Sigmoid colon (tissue), 7 donors: ENCODE measurements at regions of chr18 and their contacts with region 1.

Region 1: GRCh38 chr18:22933206-22933957 is at the start of gene RBBP8:
- DNase-seq: peak; percentile 90
- H3K4me3 ChIP-seq: peak within 1 kb of the TSS; percentile 77 to 91 (median 82)
- H3K27ac ChIP-seq: peak within 1 kb of the TSS; percentile 97 to 99 (median 98)
- H3K4me1 ChIP-seq: peaks cover 0 to 12% (median 2%) of the 10 kb centered on the region in 4 donors
- H3K27me3 ChIP-seq: no peaks in the 10 kb centered on the region
- CTCF ChIP-seq: no peak
- EP300 ChIP-seq: no peak
- POLR2A ChIP-seq: peak; percentile 63 to 77
- total RNA-seq, gene RBBP8: 10.3 to 22.7 (median 14.7) TPM

Region 2: GRCh38 chr18:22800551-22800951 is 132.8 kb before region 1 on chr18:
- intact Hi-C with region 1: loop called (anchors 1 kb)
- DNase-seq: peak; percentile 70
- H3K4me3 ChIP-seq: no peak overlapping the region
- H3K27ac ChIP-seq: peak overlapping the region in 3 of 4 donors; percentile 42 to 57 (median 43)
- H3K4me1 ChIP-seq: peaks cover 0 to 18% (median 11%) of the 10 kb centered on the region in 4 donors
- H3K27me3 ChIP-seq: no peaks in the 10 kb centered on the region
- CTCF ChIP-seq: no peak
- EP300 ChIP-seq: no peak
- POLR2A ChIP-seq: no peak

Region 3: GRCh38 chr18:22983175-22983574 is 49.8 kb after region 1 on chr18:
- intact Hi-C with region 1: loop called (anchors 5 kb)
- DNase-seq: no peak
- H3K4me3 ChIP-seq: no peak overlapping the region
- H3K27ac ChIP-seq: no peak overlapping the region
- H3K4me1 ChIP-seq: no peaks in the 10 kb centered on the region
- H3K27me3 ChIP-seq: no peaks in the 10 kb centered on the region
- CTCF ChIP-seq: peak; percentile 17 to 49 (median 30)
- EP300 ChIP-seq: no peak
- POLR2A ChIP-seq: no peak

Region 4: DNA sequence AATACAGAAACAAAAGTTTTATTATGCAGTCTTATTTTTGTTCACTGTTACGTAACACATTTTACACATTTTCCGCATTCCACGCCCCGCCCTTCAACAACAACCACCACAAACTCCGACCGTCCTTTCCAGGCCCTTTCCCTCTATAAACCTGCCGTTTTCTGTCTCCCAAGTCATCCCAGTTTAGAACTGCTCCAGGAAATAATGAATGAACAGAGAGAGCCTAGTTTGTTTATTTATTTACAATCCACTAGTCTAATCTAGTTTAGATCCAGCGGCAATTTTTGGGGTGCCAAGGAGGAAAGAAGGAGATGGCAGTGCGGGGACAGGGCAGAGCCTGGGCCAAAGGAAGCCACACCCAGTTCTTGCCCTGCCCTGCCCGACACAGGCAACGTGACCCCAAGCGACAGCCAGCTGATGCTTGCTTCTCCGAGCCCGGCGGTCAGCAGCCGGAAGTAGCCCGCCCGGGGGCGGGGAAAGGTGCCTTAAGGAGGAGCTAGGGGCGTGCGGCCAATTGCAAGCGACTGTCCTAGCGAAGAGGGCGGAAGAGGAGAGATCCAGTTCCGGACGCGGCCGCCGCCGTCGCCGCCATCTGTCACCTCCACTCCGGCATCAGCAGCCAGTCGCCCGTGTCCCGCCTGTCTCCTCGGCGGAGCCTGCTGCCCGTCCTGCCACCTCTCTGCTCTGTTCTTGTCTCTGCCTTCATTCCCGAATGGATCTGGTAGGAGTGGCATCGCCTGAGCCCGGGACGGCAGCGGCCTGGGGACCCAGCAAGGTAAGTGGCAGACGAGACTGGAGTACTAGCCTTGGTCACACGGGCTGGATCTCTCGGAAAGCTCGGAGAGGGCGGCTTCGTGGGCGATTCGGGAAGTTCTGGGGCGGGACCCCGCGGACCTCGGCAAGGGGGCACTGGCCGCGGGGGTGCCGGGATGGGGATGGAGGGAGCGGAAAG is 519.6 kb after region 1 on chr18 and contains the start of gene RIOK3:
- intact Hi-C with region 1: loop called (anchors 2 kb)
- DNase-seq: peak; percentile 98
- H3K4me3 ChIP-seq: peak within 1 kb of the TSS; percentile 75 to 96 (median 78)
- H3K27ac ChIP-seq: peak within 1 kb of the TSS; percentile 89 to 97 (median 93)
- H3K4me1 ChIP-seq: peaks cover 0 to 41% (median 34%) of the 10 kb centered on the region in 4 donors
- H3K27me3 ChIP-seq: no peaks in the 10 kb centered on the region
- CTCF ChIP-seq: no peak
- EP300 ChIP-seq: peak in 1 of 4 donors; percentile 33
- POLR2A ChIP-seq: peak; percentile 90 to 93
- total RNA-seq, gene RIOK3: 38.2 to 54.6 (median 45.6) TPM